HEK293 (cell line): ENCODE measurements at regions of chr12 and their contacts with region 1.

Region 1: GRCh38 chr12:88580051-88580871 is at the start of gene KITLG:
- H3K4me3 ChIP-seq: peak within 1 kb of the TSS; percentile 84
- H3K27ac ChIP-seq: peak within 1 kb of the TSS; percentile 94
- H3K4me1 ChIP-seq: peaks cover 24% of the 10 kb centered on the region
- CTCF ChIP-seq: peak; percentile 95

Region 2: GRCh38 chr12:88141770-88142609 is 438.3 kb before region 1 on chr12 and contains the starts of genes CEP290 and TMTC3:
- CTCF ChIA-PET with region 1: no interaction called
- POLR2A ChIA-PET with region 1: interaction called, 11 read pairs
- H3K4me3 ChIP-seq: peak within 1 kb of the TSS; percentile 84
- H3K27ac ChIP-seq: peak within 1 kb of the TSS; percentile 78
- H3K4me1 ChIP-seq: peaks cover 7% of the 10 kb centered on the region
- CTCF ChIP-seq: no peak

Region 3: GRCh38 chr12:88553941-88554658 is 26.2 kb before region 1 on chr12:
- CTCF ChIA-PET with region 1: interaction called, 4 read pairs
- POLR2A ChIA-PET with region 1: interaction called, 18 read pairs
- H3K4me3 ChIP-seq: no peak overlapping the region
- H3K27ac ChIP-seq: peak overlapping the region; percentile 72
- H3K4me1 ChIP-seq: peaks cover 24% of the 10 kb centered on the region
- CTCF ChIP-seq: no peak

Region 4: DNA sequence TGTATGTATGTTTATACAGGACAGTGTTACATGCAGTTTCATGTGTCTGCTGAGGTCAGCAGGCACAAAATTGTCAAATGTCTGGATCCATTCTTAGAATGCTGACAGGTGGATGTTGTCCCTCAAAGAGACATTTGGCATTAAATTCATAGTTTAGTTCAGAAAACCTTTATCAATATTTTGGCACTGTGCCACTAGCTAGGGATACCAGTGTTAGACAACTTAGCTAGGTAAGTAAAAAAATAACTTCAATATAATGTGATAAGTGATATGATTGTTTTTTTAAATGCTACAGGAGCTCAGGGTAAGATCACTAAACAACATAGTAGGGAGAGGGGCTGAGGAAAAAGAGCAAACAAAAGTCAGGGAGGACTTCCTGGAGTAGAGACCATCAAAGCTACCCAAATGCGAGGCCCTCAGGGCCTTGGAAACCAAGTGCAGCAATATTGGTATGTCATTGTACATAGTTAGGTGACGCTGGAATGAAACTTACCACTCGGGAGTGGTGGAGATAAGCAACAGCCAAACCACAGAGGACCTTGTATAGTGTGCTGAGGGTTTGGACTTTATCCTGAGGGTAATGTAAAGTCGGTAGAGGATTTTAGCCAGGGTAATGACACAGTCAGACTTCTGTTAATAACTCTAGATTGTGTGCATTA is 14.0 kb before region 1 on chr12:
- CTCF ChIA-PET with region 1: interaction called, 14 read pairs
- POLR2A ChIA-PET with region 1: interaction called, 12 read pairs
- H3K4me3 ChIP-seq: no peak overlapping the region
- H3K27ac ChIP-seq: no peak overlapping the region
- H3K4me1 ChIP-seq: peaks cover 23% of the 10 kb centered on the region
- CTCF ChIP-seq: no peak

Region 5: GRCh38 chr12:88638966-88639760 is 58.9 kb after region 1 on chr12:
- CTCF ChIA-PET with region 1: no interaction called
- POLR2A ChIA-PET with region 1: interaction called, 14 read pairs
- H3K4me3 ChIP-seq: no peak overlapping the region
- H3K27ac ChIP-seq: no peak overlapping the region
- H3K4me1 ChIP-seq: peaks cover 6% of the 10 kb centered on the region; the same call in 1 of the 2 replicates
- CTCF ChIP-seq: no peak